Activated CD4-positive, alpha-beta T cell treated with anti-CD3 and anti-CD28 coated beads for 36 hours (primary cell): ENCODE measurements at regions of chr11 and their contacts with region 1.

Region 1: DNA sequence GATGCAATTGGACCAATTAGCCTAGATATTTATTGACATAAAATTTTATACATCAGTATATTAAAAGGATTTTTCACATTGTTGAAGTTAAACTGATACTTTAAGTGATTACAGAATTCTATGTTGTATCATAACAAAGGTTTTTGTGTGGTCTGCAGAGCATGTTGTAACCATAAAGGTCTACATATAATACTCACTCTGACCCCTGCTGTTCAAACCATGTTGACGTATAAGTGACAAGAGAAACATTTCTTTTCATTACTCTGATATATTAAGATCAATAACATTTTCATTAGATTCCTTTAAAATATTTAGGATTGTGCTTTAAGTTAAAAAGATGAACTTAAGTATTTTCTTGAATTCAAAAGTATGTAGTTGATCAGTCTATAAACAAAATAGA is 63.9 kb downstream of the GAS2 start:
- DNase-seq: no peak
- ATAC-seq: no peak
- H3K4me3 Mint-ChIP-seq: no peak overlapping the region
- H3K27ac Mint-ChIP-seq: no peak overlapping the region
- H3K4me1 Mint-ChIP-seq: no peaks in the 10 kb centered on the region
- H3K27me3 Mint-ChIP-seq: no peaks in the 10 kb centered on the region

Region 2: DNA sequence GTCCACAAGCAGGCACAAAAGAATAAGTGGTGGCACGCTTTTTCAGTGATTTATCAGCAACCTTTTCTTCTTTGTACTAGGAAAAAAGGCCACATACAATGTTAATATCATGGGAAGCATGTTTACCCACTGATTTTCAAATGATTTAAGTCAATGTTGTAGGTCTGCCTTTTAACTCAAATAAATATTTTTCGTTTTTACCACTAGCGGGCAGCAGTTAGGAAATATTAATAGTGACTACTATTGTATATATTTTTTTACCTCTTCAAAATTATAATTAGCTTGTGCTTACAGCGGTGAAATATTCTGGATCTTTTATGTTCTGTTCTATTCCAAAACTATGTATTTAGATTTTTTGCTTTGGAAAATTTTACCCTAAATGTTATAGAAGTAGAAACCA is 398.5 kb before region 1 on chr11:
- CTCF ChIA-PET with region 1: no interaction called
- POLR2A ChIA-PET with region 1: no interaction called
- intact Hi-C with region 1: loop called (anchors 2 to 5 kb)
- DNase-seq: no peak
- ATAC-seq: no peak
- H3K4me3 Mint-ChIP-seq: no peak overlapping the region
- H3K27ac Mint-ChIP-seq: no peak overlapping the region
- H3K4me1 Mint-ChIP-seq: no peaks in the 10 kb centered on the region
- H3K27me3 Mint-ChIP-seq: peaks cover 12% of the 10 kb centered on the region

Region 3: DNA sequence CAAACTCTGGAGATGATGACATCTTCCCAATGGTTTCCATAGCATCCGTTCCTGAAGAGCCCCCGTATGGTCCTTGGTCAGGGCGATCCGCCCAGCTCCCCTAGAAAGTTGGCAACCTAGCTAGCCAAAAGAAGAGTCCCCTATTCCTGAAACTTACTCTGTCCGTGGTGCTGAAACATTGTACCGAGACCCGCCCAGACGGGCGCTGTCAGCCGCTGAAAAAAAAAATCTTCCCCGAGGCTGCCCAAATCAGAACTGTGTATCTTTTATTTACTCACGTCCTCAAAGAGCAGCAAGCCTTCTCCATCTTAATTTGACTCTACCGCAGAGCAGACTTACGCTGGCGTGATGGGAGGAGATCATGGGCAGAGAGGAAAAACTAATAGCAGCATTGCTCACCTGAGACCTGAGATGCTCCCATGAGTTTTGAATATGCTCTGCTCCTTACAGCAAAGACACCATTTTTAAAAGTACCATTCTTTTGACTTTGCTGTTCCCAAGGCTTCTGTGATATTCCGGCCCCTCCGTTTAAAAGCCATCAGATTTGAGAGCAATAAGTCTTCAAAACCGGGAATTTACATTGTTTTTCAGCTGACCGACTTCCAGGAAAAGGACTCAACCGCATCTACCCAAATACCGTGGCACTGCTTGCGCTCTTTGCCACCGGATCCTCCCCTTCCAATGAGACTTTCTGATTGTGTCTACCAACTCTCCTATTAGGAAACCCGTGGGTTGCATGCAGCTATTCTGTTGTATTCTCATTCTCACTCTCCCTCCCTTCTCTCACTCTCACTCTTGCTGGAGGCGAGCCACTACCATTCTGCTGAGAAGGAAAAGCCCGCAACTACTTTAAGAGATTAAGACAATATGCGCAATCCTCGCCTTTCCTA is 392.5 kb before region 1 on chr11 and contains the start of gene SLC17A6:
- CTCF ChIA-PET with region 1: no interaction called
- POLR2A ChIA-PET with region 1: no interaction called
- intact Hi-C with region 1: loop called (anchors 2 to 5 kb)
- DNase-seq: peak; percentile 40
- ATAC-seq: peak; percentile 42
- H3K4me3 Mint-ChIP-seq: no peak within 1 kb of the TSS
- H3K27ac Mint-ChIP-seq: no peak within 1 kb of the TSS
- H3K4me1 Mint-ChIP-seq: peaks cover 14% of the 10 kb centered on the region
- H3K27me3 Mint-ChIP-seq: peaks cover 59% of the 10 kb centered on the region
- total RNA-seq, gene SLC17A6: not detected

Region 4: DNA sequence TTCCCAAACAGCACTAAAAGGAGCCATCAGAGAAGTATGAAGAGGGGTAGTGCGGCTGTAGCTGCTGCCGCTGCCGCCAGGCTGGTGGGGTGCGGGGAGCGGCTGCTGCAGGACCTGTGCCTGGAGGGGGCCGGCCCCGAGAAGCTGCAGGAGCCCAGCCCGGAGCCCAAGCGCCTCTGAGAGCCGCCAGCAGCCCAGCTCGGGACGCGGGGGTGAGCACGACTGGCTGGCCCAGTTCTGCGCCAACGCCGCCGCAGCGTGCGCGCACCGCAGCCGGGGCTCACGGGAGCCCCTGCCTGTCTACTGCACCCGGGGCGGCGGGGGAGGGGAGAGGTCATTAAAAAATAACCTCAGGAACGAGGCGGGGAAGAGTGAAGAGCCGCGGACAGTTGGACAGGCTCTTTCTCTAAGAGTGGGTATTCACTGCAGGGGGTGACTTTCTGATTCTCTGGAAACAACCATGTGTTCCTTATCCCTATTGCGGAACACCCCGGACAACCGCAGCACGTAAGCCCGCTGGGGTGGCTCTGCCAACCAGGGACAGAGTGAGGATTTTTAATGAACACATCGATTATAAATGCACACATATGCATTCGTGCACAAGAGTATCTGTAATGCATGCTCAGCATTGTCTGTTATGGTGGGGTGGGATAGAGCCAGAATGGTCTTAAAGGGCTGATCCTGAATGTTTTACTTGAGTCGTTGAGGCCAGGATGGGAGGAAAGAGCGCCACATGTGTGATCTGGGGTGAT is 63.5 kb before region 1 on chr11:
- CTCF ChIA-PET with region 1: interaction called, 9 read pairs
- POLR2A ChIA-PET with region 1: no interaction called
- intact Hi-C with region 1: loop called (anchors 2 to 5 kb)
- DNase-seq: peak; percentile 52
- ATAC-seq: peak; percentile 79
- H3K4me3 Mint-ChIP-seq: peak overlapping the region; percentile 66
- H3K27ac Mint-ChIP-seq: peak overlapping the region; percentile 29
- H3K4me1 Mint-ChIP-seq: peaks cover 21% of the 10 kb centered on the region
- H3K27me3 Mint-ChIP-seq: peaks cover 42% of the 10 kb centered on the region